Mammary epithelial cell (primary cell): ENCODE measurements at regions of chr9 and their contacts with region 1.

Region 1: DNA sequence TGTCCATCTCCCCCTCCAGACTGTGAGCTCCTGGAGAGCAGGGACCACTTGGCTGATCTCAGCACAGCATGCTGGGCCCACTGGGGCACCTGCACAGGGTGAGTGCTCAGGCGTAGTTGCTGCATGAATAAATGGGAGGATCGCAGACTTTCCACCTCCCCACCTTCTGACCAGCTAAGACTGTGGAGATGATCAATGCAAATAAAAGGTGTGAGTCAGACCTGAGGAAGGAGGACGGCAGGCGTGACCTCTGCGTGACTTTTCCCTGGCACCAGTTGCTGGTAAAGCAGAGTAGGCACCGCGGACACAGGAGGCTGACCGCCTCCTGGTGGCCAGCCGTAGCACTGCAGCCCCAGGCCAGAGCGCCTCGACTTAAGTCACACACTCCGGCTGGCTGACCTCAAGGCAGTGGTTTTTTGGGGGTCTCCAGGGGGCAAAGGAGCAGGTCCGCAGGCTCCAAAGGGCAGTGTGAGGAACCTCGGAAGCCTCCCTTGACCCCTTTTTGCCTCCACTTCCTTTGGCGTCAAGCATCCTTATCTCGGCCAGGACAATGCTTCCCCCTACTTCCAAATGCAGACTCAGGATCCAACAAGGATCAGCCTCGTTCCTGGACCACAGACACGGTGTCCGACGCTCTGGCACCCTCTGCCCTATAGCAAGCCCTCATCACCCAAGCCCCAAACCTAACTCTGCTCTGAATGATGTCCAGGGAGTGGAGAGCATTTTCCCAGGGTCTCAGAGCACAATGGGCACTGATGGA is 12.7 kb upstream of the TDRD7 start:
- DNase-seq: peak; percentile 89
- H3K4me3 ChIP-seq: no peak overlapping the region
- H3K27ac ChIP-seq: no peak overlapping the region
- H3K4me1 ChIP-seq: peaks cover 7% of the 10 kb centered on the region
- H3K27me3 ChIP-seq: no peaks in the 10 kb centered on the region
- CTCF ChIP-seq: peak; percentile 87 to 93

Region 2: DNA sequence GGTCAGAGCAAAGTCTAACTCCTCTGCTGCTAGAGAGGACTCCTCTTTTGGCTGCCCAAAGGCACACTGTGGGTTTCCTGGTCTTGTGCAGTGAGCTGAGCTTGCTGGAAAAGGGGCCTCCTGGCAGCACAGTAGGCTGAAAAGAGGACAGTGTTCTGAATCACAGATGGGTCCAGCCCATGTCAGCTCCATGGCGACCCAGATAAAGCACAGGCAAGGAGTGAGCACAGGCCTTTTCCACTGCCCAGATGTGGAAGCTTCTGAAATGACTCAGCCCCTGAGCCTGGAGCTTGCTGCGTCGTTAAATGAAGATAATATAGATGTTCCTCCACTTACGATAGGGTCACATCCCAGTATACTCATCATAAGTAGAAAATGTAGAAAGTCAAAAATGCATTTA is 83.6 kb before region 1 on chr9:
- CTCF ChIA-PET with region 1: no interaction called
- dilution Hi-C with region 1: loop called (anchors 5 kb)
- in situ Hi-C with region 1: no loop called
- intact Hi-C with region 1: no loop called
- DNase-seq: no peak
- H3K4me3 ChIP-seq: no peak overlapping the region
- H3K27ac ChIP-seq: no peak overlapping the region
- H3K4me1 ChIP-seq: no peaks in the 10 kb centered on the region
- H3K27me3 ChIP-seq: no peaks in the 10 kb centered on the region
- CTCF ChIP-seq: no peak

Region 3: DNA sequence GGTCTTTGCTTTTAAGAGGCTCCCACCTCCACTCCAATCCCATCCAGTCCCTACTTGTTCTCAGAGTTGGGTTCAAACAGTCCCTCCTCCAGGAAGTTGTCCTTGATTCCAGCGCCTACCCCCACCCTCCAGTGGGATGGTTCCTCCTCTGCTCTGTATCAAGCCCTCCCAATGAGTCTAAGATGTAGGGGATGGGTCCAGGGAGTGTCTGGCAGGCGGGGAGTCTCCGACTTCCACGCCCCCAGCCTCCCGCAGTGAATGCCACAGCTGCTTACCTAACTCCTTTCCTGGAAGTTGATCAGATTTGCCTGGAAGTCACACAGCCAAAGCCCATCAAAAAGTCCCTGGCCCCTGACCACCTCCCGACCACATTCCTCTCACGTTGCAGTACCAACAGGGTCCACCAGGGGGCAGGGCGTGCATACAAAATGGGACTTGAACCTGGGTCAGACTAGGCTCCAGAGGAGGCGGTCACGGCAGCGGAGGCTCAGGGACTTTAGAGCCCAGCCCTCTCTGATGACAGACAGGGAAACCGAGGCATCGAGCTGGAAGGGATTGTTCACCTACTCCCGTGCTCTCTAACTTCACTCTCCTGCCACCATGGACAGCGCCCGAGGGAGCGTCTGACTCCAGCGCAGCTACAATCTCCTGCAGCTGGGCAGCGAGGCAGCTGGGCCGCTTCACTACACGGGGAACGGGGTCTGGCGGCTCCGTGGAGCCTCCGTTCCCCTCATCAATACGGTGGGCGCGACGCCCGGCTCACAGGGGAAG is 12.3 kb before region 1 on chr9:
- CTCF ChIA-PET with region 1: no interaction called
- dilution Hi-C with region 1: no loop called
- in situ Hi-C with region 1: no loop called
- intact Hi-C with region 1: loop called (anchors 1 kb)
- DNase-seq: peak; percentile 66
- H3K4me3 ChIP-seq: no peak overlapping the region
- H3K27ac ChIP-seq: no peak overlapping the region
- H3K4me1 ChIP-seq: no peaks in the 10 kb centered on the region
- H3K27me3 ChIP-seq: peaks cover 3% of the 10 kb centered on the region
- CTCF ChIP-seq: peak; percentile 99

Region 4: GRCh38 chr9:97411789-97412625 is 12.8 kb after region 1 on chr9 and contains the start of gene TDRD7:
- CTCF ChIA-PET with region 1: no interaction called
- dilution Hi-C with region 1: no loop called
- in situ Hi-C with region 1: no loop called
- intact Hi-C with region 1: loop called (anchors 1 kb)
- DNase-seq: peak; percentile 63
- H3K4me3 ChIP-seq: peak within 1 kb of the TSS; percentile 75 to 80 (median 77)
- H3K27ac ChIP-seq: peak within 1 kb of the TSS; percentile 39
- H3K4me1 ChIP-seq: peaks cover 10% of the 10 kb centered on the region
- H3K27me3 ChIP-seq: no peaks in the 10 kb centered on the region
- CTCF ChIP-seq: peak; percentile 89 to 95
- total RNA-seq, gene TDRD7: 8.5 to 8.9 TPM

Region 5: DNA sequence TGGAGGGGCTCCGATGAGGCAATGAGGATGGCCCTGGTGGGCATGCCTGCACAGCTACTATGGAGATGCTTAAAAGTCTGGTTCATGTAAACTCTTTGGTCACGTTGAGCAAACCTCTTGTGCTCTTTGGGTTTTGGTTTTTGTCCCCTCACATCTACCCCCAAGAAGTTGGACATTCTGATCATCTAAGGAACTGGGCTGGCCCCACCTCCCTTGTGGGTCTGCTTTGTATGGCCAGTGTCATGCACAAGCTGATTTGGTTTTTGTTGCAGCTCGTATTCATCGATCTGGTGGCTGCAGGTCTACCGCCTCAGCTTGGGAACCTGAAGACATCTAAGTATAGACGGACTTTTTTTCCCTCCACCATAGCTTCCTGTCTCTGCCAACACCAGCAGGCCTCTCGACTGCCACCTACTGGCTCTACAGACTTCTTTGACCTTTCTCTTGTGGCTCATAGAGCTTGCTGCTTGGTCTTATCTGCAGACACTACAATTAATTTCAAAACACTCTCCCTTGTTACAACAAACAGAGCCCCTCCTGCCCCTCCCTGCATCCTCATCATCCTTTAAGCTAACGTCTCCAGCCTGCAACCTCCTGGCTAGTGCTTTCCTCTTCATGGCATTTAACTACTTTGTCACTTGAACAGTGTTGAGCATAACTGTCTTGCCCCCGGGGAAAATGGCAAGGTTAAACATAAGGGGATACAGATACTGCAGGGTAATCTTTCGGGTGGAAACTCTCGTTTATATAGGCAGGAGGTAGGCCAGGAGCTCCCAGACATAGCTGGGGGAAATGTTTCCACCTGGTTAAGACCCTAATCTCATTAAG is 199.5 kb after region 1 on chr9:
- CTCF ChIA-PET with region 1: interaction called, 4 read pairs
- dilution Hi-C with region 1: no loop called
- in situ Hi-C with region 1: no loop called
- intact Hi-C with region 1: loop called (anchors 5 kb)
- DNase-seq: peak; percentile 56
- H3K4me3 ChIP-seq: no peak overlapping the region
- H3K27ac ChIP-seq: no peak overlapping the region
- H3K4me1 ChIP-seq: no peaks in the 10 kb centered on the region
- H3K27me3 ChIP-seq: no peaks in the 10 kb centered on the region
- CTCF ChIP-seq: peak; percentile 90 to 92